Caco-2 (cell line): ENCODE measurements at regions of chr13 and their contacts with region 1.

Region 1: DNA sequence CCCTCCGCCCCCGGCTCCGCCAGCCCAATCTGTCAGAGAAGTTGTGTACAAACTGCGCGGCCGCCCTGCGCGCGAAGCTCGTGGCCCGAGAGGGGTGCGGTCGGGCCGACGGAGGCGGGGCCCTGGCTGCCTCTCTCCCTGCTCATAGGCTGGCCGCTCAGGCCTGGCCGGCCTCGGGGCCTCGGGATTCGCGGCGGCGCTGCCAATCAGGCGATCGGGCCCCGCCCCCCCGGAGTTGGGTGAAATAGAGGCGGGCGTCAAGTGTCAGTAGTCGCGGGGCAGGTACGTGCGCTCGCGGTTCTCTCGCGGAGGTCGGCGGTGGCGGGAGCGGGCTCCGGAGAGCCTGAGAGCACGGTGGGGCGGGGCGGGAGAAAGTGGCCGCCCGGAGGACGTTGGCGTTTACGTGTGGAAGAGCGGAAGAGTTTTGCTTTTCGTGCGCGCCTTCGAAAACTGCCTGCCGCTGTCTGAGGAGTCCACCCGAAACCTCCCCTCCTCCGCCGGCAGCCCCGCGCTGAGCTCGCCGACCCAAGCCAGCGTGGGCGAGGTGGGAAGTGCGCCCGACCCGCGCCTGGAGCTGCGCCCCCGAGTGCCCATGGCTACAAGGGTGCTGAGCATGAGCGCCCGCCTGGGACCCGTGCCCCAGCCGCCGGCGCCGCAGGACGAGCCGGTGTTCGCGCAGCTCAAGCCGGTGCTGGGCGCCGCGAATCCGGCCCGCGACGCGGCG is at the start of gene KLF5:
- DNase-seq: peak; percentile 99 to 100
- H3K4me3 ChIP-seq: peak within 1 kb of the TSS; percentile 99
- H3K4me3 Mint-ChIP-seq: peak within 1 kb of the TSS; percentile 76
- H3K27ac Mint-ChIP-seq: peak within 1 kb of the TSS; percentile 80
- H3K4me1 ChIP-seq: peaks cover 61% of the 10 kb centered on the region
- H3K4me1 Mint-ChIP-seq: peaks cover 35% of the 10 kb centered on the region
- H3K27me3 ChIP-seq: no peaks in the 10 kb centered on the region
- H3K27me3 Mint-ChIP-seq: no peaks in the 10 kb centered on the region
- CTCF ChIP-seq: no peak
- total RNA-seq, gene KLF5: 80.1 and 103 TPM in 2 replicates

Region 2: DNA sequence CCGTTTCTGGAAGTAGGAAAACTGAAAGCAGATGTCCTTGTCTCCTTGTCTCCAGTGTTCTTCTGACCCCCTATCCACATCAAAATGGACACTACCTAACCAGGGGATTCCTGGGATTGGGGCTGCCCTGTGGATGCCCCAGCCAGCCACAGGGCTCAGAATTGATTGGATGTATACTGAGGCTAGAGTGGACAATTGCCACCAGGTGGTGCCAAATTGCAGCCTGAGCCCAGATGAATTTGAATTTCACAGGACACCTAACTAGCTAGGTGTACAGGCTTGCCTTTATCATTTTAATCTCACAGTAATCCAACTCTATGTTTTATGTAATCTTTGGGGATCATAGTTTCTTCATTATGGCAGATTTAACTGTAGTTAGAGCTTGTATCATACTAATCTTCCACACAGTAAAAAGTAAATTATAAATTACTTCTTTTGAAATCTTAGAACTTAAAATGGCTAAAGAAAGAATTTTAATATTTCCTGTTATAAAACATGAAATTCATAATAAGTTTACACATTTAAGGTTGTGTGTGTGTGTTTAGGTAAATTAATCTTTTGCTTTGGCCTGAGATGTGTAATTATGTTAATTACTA is 219.0 kb before region 1 on chr13:
- CTCF ChIA-PET with region 1: interaction called, 8 read pairs
- POLR2A ChIA-PET with region 1: no interaction called
- intact Hi-C with region 1: loop called (anchors 1 kb)
- DNase-seq: peak; percentile 77 to 80
- H3K4me3 ChIP-seq: no peak overlapping the region
- H3K4me3 Mint-ChIP-seq: no peak overlapping the region
- H3K27ac Mint-ChIP-seq: no peak overlapping the region
- H3K4me1 ChIP-seq: no peaks in the 10 kb centered on the region; the same call in 1 of the 2 replicates
- H3K4me1 Mint-ChIP-seq: no peaks in the 10 kb centered on the region
- H3K27me3 ChIP-seq: no peaks in the 10 kb centered on the region
- H3K27me3 Mint-ChIP-seq: no peaks in the 10 kb centered on the region
- CTCF ChIP-seq: peak; percentile 89 to 90

Region 3: GRCh38 chr13:72983085-72983768 is 75.7 kb before region 1 on chr13:
- CTCF ChIA-PET with region 1: interaction called, 3 read pairs
- POLR2A ChIA-PET with region 1: no interaction called
- intact Hi-C with region 1: loop called (anchors 2 kb)
- DNase-seq: peak; percentile 38 to 48
- H3K4me3 ChIP-seq: no peak overlapping the region
- H3K4me3 Mint-ChIP-seq: no peak overlapping the region
- H3K27ac Mint-ChIP-seq: peak overlapping the region; percentile 36
- H3K4me1 ChIP-seq: peaks cover 51% of the 10 kb centered on the region
- H3K4me1 Mint-ChIP-seq: no peaks in the 10 kb centered on the region
- H3K27me3 ChIP-seq: no peaks in the 10 kb centered on the region
- H3K27me3 Mint-ChIP-seq: no peaks in the 10 kb centered on the region
- CTCF ChIP-seq: no peak

Region 4: DNA sequence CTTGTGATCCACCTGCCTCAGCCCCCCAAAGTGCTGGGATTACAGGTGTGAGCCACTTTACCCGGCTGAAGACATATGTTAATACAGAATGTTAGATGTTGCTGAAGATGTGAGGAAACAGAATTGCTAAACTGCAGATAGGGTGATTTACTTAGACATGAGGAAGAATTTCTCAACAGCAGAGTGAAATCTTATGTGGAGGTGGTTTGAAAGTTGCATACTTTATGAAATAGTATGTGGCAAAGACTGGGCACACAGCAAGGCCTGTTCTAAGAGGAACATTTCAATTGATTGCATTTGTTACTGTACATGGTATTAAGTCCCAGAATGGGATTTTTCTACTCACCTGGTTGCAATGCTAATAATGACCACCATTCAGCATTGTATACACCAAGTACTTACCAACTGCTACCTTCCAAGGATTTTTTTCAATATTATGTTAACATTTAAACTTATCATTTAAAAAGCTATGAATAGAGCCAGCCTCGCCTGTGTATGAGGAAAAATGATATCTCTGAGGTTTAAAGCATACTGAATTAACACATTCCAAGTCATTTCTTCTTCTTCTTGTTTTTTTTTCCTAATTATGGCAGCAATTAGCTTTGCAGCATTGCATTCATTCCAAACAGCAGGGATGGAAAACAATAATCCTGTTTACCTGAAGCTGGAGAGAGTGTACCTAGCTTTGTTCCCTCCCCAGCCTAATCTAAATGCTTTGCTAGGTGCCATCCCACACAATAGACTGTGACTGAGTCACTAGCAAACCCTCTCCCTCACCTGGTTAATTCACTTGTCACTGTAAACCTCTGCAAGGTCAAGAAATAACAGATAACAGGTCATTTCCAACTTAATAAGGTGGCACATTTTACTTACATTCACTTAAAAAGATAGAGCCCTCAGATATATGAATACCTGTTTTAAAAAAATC is 19.5 kb before region 1 on chr13:
- CTCF ChIA-PET with region 1: interaction called, 6 read pairs
- POLR2A ChIA-PET with region 1: interaction called, 14 read pairs
- intact Hi-C with region 1: loop called (anchors 1 kb)
- DNase-seq: no peak
- H3K4me3 ChIP-seq: no peak overlapping the region
- H3K4me3 Mint-ChIP-seq: peak overlapping the region; percentile 38
- H3K27ac Mint-ChIP-seq: peak overlapping the region; percentile 45
- H3K4me1 ChIP-seq: peaks cover 57% of the 10 kb centered on the region
- H3K4me1 Mint-ChIP-seq: peaks cover 36% of the 10 kb centered on the region
- H3K27me3 ChIP-seq: no peaks in the 10 kb centered on the region
- H3K27me3 Mint-ChIP-seq: no peaks in the 10 kb centered on the region
- CTCF ChIP-seq: peak; percentile 4 to 18

Region 5: DNA sequence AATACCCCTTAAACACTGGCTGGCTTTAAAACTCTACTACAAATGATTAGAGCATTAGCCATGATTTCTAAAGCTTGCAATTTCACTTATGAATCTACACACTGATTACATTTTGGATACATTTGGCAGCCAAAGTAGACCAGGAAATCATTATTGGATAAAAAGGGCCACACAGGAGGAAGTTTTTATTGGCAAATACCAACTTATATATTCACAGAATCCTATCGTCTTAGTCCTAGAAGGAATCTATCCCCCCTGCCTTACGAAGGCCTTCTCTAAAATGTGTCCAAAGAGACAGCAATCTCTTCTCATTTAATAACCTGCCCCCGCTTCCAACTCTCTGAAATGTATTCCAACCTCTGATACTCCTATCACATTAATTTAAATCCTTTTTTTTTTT is 52.4 kb after region 1 on chr13:
- CTCF ChIA-PET with region 1: no interaction called
- POLR2A ChIA-PET with region 1: no interaction called
- intact Hi-C with region 1: no loop called
- DNase-seq: no peak
- H3K4me3 ChIP-seq: no peak overlapping the region
- H3K4me3 Mint-ChIP-seq: no peak overlapping the region
- H3K27ac Mint-ChIP-seq: no peak overlapping the region
- H3K4me1 ChIP-seq: peaks cover 17% of the 10 kb centered on the region
- H3K4me1 Mint-ChIP-seq: peaks cover 28% of the 10 kb centered on the region
- H3K27me3 ChIP-seq: no peaks in the 10 kb centered on the region
- H3K27me3 Mint-ChIP-seq: no peaks in the 10 kb centered on the region
- CTCF ChIP-seq: no peak

Region 6: DNA sequence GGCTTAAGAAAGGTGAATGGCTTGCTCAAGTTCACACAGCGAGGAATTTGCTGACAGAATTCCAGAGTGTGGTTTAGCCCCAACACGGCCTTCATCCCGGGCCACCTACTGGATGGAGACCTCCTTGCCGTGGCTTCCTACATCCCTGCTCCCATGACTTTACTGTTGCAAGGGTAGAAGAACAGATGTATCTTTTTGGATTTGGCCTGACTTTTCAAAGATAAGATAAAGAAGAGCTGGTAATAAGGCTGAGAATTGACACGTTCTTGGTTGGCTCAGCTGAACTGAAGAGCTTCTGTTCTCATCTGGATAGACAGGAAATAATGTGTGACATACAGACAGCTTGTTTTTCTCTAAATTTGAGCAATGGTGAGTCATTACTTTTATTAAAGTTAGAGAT is 113.0 kb after region 1 on chr13:
- CTCF ChIA-PET with region 1: interaction called, 9 read pairs
- POLR2A ChIA-PET with region 1: interaction called, 3 read pairs
- intact Hi-C with region 1: loop called (anchors 1 kb)
- DNase-seq: peak; percentile 67 to 81
- H3K4me3 ChIP-seq: no peak overlapping the region
- H3K4me3 Mint-ChIP-seq: peak overlapping the region; percentile 31
- H3K27ac Mint-ChIP-seq: peak overlapping the region; percentile 97
- H3K4me1 ChIP-seq: peaks cover 82% of the 10 kb centered on the region
- H3K4me1 Mint-ChIP-seq: peaks cover 51% of the 10 kb centered on the region
- H3K27me3 ChIP-seq: no peaks in the 10 kb centered on the region
- H3K27me3 Mint-ChIP-seq: no peaks in the 10 kb centered on the region
- CTCF ChIP-seq: peak in 1 of 2 experiments; percentile 61

Region 7: GRCh38 chr13:73325711-73326558 is 267.0 kb after region 1 on chr13:
- CTCF ChIA-PET with region 1: no interaction called
- POLR2A ChIA-PET with region 1: no interaction called
- intact Hi-C with region 1: loop called (anchors 5 kb)
- DNase-seq: peak; percentile 64 to 78
- H3K4me3 ChIP-seq: no peak overlapping the region
- H3K4me3 Mint-ChIP-seq: peak overlapping the region; percentile 65
- H3K27ac Mint-ChIP-seq: peak overlapping the region; percentile 75
- H3K4me1 ChIP-seq: peaks cover 42% of the 10 kb centered on the region
- H3K4me1 Mint-ChIP-seq: peaks cover 30% of the 10 kb centered on the region
- H3K27me3 ChIP-seq: no peaks in the 10 kb centered on the region
- H3K27me3 Mint-ChIP-seq: no peaks in the 10 kb centered on the region
- CTCF ChIP-seq: no peak

Region 8: DNA sequence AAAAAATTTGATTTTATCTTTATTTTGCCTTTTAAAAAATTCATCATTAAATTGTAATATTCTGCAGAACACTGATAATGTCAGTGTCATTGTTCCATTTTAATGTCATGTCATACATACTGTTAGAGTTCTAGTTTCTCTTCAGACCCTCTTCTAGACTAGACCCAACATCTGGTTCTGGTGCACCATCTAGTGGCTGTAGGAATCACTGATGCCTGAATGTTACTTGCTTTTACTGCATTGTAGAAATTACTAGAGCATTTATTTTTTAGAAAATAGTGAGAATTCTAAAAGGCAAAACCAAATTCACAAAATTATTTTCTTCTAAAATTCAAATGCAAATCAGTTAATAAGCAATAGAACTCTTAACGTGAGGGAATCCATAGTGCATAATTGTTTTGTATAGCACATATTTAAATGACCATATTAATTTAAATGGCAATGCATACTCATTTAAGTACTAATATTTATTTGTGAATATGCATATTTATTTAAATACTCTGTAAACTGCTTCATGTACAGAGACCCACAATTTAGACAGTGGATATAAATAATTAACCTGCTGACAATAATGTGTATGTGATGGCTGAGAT is 649.6 kb after region 1 on chr13:
- CTCF ChIA-PET with region 1: no interaction called
- POLR2A ChIA-PET with region 1: no interaction called
- intact Hi-C with region 1: loop called (anchors 2 kb)
- DNase-seq: peak; percentile 65 to 75
- H3K4me3 ChIP-seq: no peak overlapping the region
- H3K4me3 Mint-ChIP-seq: no peak overlapping the region
- H3K27ac Mint-ChIP-seq: no peak overlapping the region
- H3K4me1 ChIP-seq: no peaks in the 10 kb centered on the region
- H3K4me1 Mint-ChIP-seq: no peaks in the 10 kb centered on the region
- H3K27me3 ChIP-seq: no peaks in the 10 kb centered on the region
- H3K27me3 Mint-ChIP-seq: no peaks in the 10 kb centered on the region
- CTCF ChIP-seq: peak; percentile 82 to 94